Posterior vena cava (tissue), 2 donors: ENCODE measurements at regions of chr2 and their contacts with region 1.

Region 1: GRCh38 chr2:114316532-114317300 is 125.7 kb upstream of the DPP10 start:
- DNase-seq: no peak

Region 2: DNA sequence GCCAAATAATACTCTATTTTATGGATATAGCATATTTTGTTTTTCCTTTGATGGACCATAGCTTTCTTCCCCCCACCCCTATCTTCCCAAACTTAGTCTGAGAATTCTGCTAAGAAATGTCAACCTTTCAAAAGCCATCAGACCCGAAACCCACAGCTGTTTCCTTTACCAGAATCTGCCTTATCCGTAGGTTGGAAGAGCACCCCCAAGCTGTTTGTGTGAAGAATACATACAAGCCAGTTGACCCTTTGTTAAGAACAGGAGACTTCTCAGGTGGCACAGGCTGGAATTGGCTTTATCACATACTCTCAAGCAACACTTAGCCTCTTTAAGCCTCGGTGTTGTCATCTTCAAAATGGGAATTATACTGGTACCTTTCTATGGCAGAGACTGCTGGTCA is 291.7 kb before region 1 on chr2:
- intact Hi-C with region 1: loop called in 1 of 2 experiments (anchors 5 kb)
- DNase-seq: no peak

Region 3: GRCh38 chr2:114294741-114295140 is 22.0 kb before region 1 on chr2:
- intact Hi-C with region 1: no loop called
- DNase-seq: no peak